Activated CD4-positive, alpha-beta memory T cell treated with anti-CD3 and anti-CD28 coated beads, Interleukin-2, amount 10 ng/mL, durations not matched to agents 7 days and 5 days (primary cell): ENCODE measurements at regions of chr5 and their contacts with region 1.

Region 1: GRCh38 chr5:151126199-151126645 is 31.4 kb downstream of the ANXA6 start:
- DNase-seq: peak; percentile 67
- H3K4me3 Mint-ChIP-seq: no peak overlapping the region
- H3K27ac Mint-ChIP-seq: peak overlapping the region; percentile 88
- H3K4me1 Mint-ChIP-seq: peaks cover 34% of the 10 kb centered on the region
- H3K27me3 Mint-ChIP-seq: no peaks in the 10 kb centered on the region

Region 2: DNA sequence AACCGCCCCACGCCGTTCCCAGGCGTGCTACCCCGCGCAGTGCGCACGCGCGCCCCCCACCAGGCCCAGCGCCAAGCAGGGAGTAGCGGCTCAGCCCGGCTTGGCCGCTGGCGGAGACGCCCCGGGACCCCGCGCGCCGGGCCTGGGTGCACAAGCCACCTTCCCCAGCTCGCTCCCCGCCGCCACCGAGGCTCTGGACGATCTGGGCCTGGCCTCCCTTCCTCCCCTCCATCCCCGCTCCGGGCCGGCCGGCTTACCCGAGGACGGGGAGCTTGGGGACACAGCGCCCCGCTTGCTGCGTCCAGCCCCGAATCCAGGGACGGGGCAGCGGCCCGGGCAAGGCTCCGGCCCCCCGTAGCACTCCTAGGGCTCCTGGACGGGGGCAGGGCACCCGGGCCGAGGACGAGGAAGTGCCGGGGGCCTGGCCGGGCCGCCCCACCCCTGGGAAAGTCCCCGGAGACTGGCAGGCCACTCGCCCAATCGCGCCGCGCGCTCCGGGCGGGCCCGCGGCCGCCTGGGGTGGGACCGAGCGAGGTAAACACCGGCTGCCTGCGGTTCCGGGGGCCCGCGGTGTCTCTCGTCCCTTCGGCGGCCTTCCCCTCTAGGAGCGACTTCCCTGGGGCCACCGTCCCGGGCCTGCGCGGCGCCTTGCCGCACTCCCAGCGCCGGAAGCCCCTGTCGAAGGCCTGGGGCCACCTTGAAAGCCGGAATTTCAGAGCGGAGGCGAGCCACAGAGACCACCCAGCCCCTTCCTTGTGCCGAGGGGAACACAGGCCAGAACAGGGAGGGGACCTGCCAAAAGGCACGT is 45.4 kb before region 1 on chr5 and contains the start of gene TNIP1:
- CTCF ChIA-PET with region 1: interaction called, 12 read pairs
- POLR2A ChIA-PET with region 1: interaction called, 3 read pairs
- DNase-seq: peak; percentile 94
- H3K4me3 Mint-ChIP-seq: peak within 1 kb of the TSS; percentile 88
- H3K27ac Mint-ChIP-seq: peak within 1 kb of the TSS; percentile 86
- H3K4me1 Mint-ChIP-seq: peaks cover 83% of the 10 kb centered on the region
- H3K27me3 Mint-ChIP-seq: no peaks in the 10 kb centered on the region
- total RNA-seq, gene TNIP1: 188 to 201 TPM

Region 3: GRCh38 chr5:151141535-151141934 is 15.3 kb after region 1 on chr5:
- CTCF ChIA-PET with region 1: interaction called, 35 read pairs
- POLR2A ChIA-PET with region 1: interaction called, 12 read pairs
- DNase-seq: peak; percentile 61
- H3K4me3 Mint-ChIP-seq: peak overlapping the region; percentile 21
- H3K27ac Mint-ChIP-seq: peak overlapping the region; percentile 70
- H3K4me1 Mint-ChIP-seq: peaks cover 93% of the 10 kb centered on the region
- H3K27me3 Mint-ChIP-seq: no peaks in the 10 kb centered on the region

Region 4: GRCh38 chr5:151157426-151158286 is 31.4 kb after region 1 on chr5 and contains the start of gene ANXA6:
- CTCF ChIA-PET with region 1: interaction called, 242 read pairs
- POLR2A ChIA-PET with region 1: interaction called, 12 read pairs
- DNase-seq: peak; percentile 75
- H3K4me3 Mint-ChIP-seq: peak within 1 kb of the TSS; percentile 95
- H3K27ac Mint-ChIP-seq: peak within 1 kb of the TSS; percentile 96
- H3K4me1 Mint-ChIP-seq: peaks cover 42% of the 10 kb centered on the region
- H3K27me3 Mint-ChIP-seq: no peaks in the 10 kb centered on the region
- total RNA-seq, gene ANXA6: 603 to 606 TPM

Region 5: GRCh38 chr5:151213800-151214613 is 87.8 kb after region 1 on chr5:
- CTCF ChIA-PET with region 1: interaction called, 14 read pairs
- POLR2A ChIA-PET with region 1: interaction called, 3 read pairs
- DNase-seq: peak; percentile 92
- H3K4me3 Mint-ChIP-seq: peak overlapping the region; percentile 86
- H3K27ac Mint-ChIP-seq: peak overlapping the region; percentile 98
- H3K4me1 Mint-ChIP-seq: peaks cover 77% of the 10 kb centered on the region
- H3K27me3 Mint-ChIP-seq: no peaks in the 10 kb centered on the region

Region 6: DNA sequence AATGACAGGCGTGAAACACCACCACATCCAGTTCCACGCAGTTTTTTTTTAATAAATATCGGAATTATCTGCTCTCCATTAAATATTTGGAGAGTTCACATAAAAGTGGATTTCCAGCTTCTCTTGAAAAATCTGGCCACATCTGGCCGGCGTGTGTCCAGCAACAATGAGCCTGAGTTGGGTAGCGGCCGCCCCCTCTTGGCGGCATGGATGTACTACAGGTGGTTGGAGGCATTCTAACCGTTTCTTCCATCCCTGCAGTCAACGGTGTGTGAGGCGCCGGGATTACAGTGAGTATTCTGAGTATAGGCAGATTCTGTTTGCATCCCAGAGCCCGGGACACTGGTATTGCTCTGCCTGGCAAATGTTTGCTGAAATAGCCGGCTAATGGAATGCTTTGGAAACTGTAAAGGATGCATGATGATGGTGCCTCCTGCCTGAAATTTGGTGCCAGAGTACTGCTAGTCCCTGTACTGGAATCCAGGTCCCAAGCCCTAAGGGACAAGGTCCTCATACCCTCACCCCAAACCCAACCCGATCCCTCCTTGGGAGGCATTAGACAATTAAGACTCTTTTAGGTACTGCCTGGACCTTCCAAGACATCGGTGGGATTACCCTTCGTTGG is 113.1 kb after region 1 on chr5:
- CTCF ChIA-PET with region 1: interaction called, 38 read pairs
- POLR2A ChIA-PET with region 1: interaction called, 5 read pairs
- DNase-seq: peak; percentile 52
- H3K4me3 Mint-ChIP-seq: no peak overlapping the region
- H3K27ac Mint-ChIP-seq: no peak overlapping the region
- H3K4me1 Mint-ChIP-seq: peaks cover 40% of the 10 kb centered on the region
- H3K27me3 Mint-ChIP-seq: no peaks in the 10 kb centered on the region